Mucosa of descending colon (tissue), 3 donors: ENCODE measurements at regions of chr16 and their contacts with region 1.

Region 1: GRCh38 chr16:30028438-30029076 is 2.5 kb downstream of the TLCD3B start:
- DNase-seq: no peak
- ATAC-seq: peak; percentile 31
- H3K4me3 ChIP-seq: no peak overlapping the region
- H3K4me1 ChIP-seq: peaks cover 3% of the 10 kb centered on the region
- CTCF ChIP-seq: no peak

Region 2: DNA sequence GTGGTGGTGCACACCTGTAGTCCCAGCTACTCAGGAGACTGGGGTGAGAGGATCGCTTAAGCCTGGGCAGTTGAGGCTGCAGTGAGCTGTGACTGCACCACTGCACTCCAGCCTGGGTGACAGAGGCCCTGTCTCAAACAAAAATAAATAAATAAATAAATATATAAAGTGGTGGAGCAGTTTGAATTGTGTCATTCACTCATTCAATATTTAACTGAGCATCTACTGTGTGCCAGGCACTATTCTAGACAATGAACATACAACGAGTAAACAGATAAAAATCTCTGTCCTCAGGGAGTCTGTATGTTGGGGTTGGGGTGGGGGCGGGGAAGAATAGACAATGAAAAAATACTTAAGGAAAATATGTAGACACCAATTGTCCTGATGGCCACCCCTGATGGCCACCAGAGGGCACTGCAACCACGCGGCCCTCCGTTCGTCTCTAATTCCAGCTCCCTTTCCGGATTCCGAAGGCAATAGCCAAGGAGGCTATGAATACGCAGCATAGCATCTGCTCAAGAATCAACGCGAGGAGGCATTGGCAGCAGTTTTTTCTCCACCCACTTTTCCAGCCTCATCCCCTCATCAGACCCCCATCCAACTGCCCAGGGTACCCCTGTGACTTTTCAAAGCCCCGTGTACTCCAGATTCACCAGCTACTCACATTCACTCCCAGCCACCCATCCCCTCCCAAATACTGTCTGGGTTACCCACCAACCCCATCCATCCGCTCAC is 328.1 kb before region 1 on chr16:
- intact Hi-C with region 1: loop called in 1 of 2 experiments (anchors 10 kb)
- DNase-seq: peak; percentile 79 to 85 (median 84)
- ATAC-seq: peak; percentile 96
- H3K4me3 ChIP-seq: no peak overlapping the region
- H3K4me1 ChIP-seq: no peaks in the 10 kb centered on the region
- CTCF ChIP-seq: peak; percentile 82

Region 3: DNA sequence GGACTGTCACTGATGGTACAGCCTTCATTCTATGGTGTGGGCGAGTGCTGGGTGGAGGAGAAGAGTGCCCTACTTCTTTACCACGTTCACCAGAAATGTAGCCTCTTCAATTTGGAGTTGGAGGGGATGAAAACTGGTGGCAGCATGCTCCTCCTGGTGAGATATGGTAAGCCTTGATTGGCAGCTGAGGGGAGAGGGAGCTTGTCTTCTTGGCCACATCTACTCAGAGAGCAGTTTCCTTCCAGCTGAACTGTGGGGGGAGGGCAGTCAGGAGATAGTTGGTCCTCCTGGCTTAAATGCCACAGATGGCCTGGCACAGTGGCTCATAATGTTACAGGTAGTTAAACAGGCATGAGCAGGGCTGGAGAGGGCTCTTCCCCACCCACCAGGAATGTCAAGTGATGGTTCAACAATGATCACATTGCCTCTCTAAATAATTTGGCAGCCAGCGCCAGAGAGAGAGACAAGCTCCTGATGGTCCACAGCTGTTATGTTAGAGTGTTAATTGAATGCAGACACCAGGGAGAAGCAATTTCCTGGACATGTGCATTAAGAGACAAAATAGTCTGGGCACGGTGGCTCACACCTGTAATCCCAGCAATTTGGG is 103.4 kb after region 1 on chr16:
- intact Hi-C with region 1: no loop called
- DNase-seq: no peak
- ATAC-seq: no peak
- H3K4me3 ChIP-seq: no peak overlapping the region
- H3K4me1 ChIP-seq: no peaks in the 10 kb centered on the region
- CTCF ChIP-seq: no peak